Ascending aorta (tissue), 2 donors: ENCODE measurements at regions of chr9 and their contacts with region 1.

Region 1: GRCh38 chr9:130847327-130848217 is 12.5 kb downstream of the ABL1 start:
- DNase-seq: peak; percentile 53 to 93
- H3K4me3 ChIP-seq: peak overlapping the region; percentile 40 to 50
- H3K27ac ChIP-seq: peak overlapping the region; percentile 95 to 98
- H3K4me1 ChIP-seq: peaks cover 19 to 60% of the 10 kb centered on the region in 2 donors
- H3K27me3 ChIP-seq: no peaks in the 10 kb centered on the region
- CTCF ChIP-seq: peak in 2 of 3 experiments; percentile 26 to 29

Region 2: GRCh38 chr9:130780865-130781504 is 66.6 kb before region 1 on chr9:
- intact Hi-C with region 1: loop called (anchors 1 kb)
- DNase-seq: peak; percentile 53 to 92
- H3K4me3 ChIP-seq: peak overlapping the region; percentile 52 to 64
- H3K27ac ChIP-seq: peak overlapping the region; percentile 94 to 97
- H3K4me1 ChIP-seq: peaks cover 4 to 41% of the 10 kb centered on the region in 2 donors
- H3K27me3 ChIP-seq: no peaks in the 10 kb centered on the region
- CTCF ChIP-seq: no peak

Region 3: DNA sequence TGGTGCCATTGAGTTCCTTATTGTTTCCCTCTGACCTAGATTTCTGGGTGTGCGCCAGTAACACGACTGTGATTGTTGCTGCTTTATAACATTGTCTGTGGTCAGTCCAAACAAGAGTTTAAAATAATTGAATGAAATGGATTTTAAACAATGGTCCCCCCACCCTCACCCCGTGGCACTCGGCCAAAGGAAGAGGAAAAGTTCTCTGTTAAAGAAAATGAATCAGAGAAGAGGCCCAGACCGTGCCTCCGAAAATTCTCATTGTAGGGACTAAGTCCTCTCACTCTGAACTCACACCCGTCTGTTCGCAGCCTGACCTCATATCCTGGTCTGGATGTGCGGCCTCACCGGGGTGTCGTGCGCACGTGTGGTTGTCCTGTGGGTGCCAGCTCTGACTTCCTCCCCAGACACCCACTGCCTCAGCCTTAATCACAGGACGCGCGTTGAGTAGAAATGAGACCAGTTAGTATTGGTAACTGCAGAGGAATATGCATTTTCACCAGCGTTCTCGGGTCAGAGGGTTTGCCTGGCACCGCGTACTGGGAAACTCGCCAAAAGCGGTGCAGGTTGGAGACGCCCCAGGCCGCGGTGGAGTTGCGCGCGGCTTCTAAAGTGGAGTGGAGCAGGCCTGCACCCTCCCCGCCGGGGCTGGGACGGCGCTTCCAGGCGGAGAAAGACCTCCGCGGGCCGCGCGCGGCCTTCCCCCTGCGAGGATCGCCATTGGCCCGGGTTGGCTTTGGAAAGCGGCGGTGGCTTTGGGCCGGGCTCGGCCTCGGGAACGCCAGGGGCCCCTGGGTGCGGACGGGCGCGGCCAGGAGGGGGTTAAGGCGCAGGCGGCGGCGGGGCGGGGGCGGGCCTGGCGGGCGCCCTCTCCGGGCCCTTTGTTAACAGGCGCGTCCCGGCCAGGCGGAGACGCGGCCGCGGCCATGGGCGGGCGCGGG is 12.9 kb before region 1 on chr9 and contains the start of gene ABL1:
- intact Hi-C with region 1: loop called (anchors 1 kb)
- DNase-seq: peak; percentile 62 to 92
- H3K4me3 ChIP-seq: peak within 1 kb of the TSS; percentile 77 to 96
- H3K27ac ChIP-seq: peak within 1 kb of the TSS; percentile 95 to 98
- H3K4me1 ChIP-seq: peaks cover 12 to 26% of the 10 kb centered on the region in 2 donors
- H3K27me3 ChIP-seq: no peaks in the 10 kb centered on the region
- CTCF ChIP-seq: no peak
- total RNA-seq, gene ABL1: 99.1 TPM

Region 4: GRCh38 chr9:131755541-131756198 is 908.1 kb after region 1 on chr9:
- intact Hi-C with region 1: no loop called
- DNase-seq: peak in 1 of 2 donors; percentile 80
- H3K4me3 ChIP-seq: no peak overlapping the region
- H3K27ac ChIP-seq: no peak overlapping the region
- H3K4me1 ChIP-seq: no peaks in the 10 kb centered on the region
- H3K27me3 ChIP-seq: no peaks in the 10 kb centered on the region
- CTCF ChIP-seq: peak; percentile 4 to 74 (median 69)